CD14-positive monocyte (primary cell): ENCODE measurements at regions of chr19 and their contacts with region 1.

Region 1: GRCh38 chr19:51259348-51260245 is 8.7 kb downstream of the SIGLECL1 start:
- DNase-seq: peak; percentile 41 to 60 (median 52)
- H3K4me3 ChIP-seq: no peak overlapping the region
- H3K4me3 Mint-ChIP-seq: no peak overlapping the region
- H3K27ac ChIP-seq: no peak overlapping the region
- H3K27ac Mint-ChIP-seq: no peak overlapping the region
- H3K4me1 ChIP-seq: peaks cover 12 to 17% of the 10 kb centered on the region in 2 donors
- H3K4me1 Mint-ChIP-seq: peaks cover 19% of the 10 kb centered on the region
- H3K27me3 ChIP-seq: no peaks in the 10 kb centered on the region
- H3K27me3 Mint-ChIP-seq: peaks cover 0 to 2% (median 1%) of the 10 kb centered on the region in 3 donors
- CTCF ChIP-seq: peak; percentile 89

Region 2: GRCh38 chr19:51158474-51159129 is 101.0 kb before region 1 on chr19:
- intact Hi-C with region 1: loop called (anchors 2 kb)
- DNase-seq: peak; percentile 68 to 73 (median 70)
- H3K4me3 ChIP-seq: no peak overlapping the region
- H3K4me3 Mint-ChIP-seq: no peak overlapping the region
- H3K27ac ChIP-seq: peak overlapping the region in 1 of 2 donors; percentile 24
- H3K27ac Mint-ChIP-seq: peak overlapping the region; percentile 23 to 93 (median 87)
- H3K4me1 ChIP-seq: peaks cover 8 to 13% of the 10 kb centered on the region in 2 donors
- H3K4me1 Mint-ChIP-seq: peaks cover 12% of the 10 kb centered on the region
- H3K27me3 ChIP-seq: no peaks in the 10 kb centered on the region
- H3K27me3 Mint-ChIP-seq: peaks cover 0 to 5% (median 3%) of the 10 kb centered on the region in 3 donors
- CTCF ChIP-seq: peak; percentile 99

Region 3: GRCh38 chr19:51179256-51179655 is 80.3 kb before region 1 on chr19:
- intact Hi-C with region 1: no loop called
- DNase-seq: no peak
- H3K4me3 ChIP-seq: no peak overlapping the region
- H3K4me3 Mint-ChIP-seq: no peak overlapping the region
- H3K27ac ChIP-seq: no peak overlapping the region
- H3K27ac Mint-ChIP-seq: no peak overlapping the region
- H3K4me1 ChIP-seq: peaks cover 22 to 24% of the 10 kb centered on the region in 2 donors
- H3K4me1 Mint-ChIP-seq: peaks cover 22% of the 10 kb centered on the region
- H3K27me3 ChIP-seq: peaks cover 0 to 7% of the 10 kb centered on the region in 2 donors
- H3K27me3 Mint-ChIP-seq: peaks cover 8 to 14% (median 11%) of the 10 kb centered on the region in 3 donors
- CTCF ChIP-seq: no peak

Region 4: GRCh38 chr19:51203916-51204315 is 55.7 kb before region 1 on chr19:
- intact Hi-C with region 1: loop called in 1 of 2 experiments (anchors 10 kb)
- DNase-seq: peak in 2 of 3 donors; percentile 34 to 50
- H3K4me3 ChIP-seq: peak overlapping the region in 1 of 3 experiments; percentile 48
- H3K4me3 Mint-ChIP-seq: peak overlapping the region; percentile 28 to 69
- H3K27ac ChIP-seq: peak overlapping the region in 1 of 2 donors; percentile 48
- H3K27ac Mint-ChIP-seq: peak overlapping the region in 6 of 7 donors; percentile 6 to 91 (median 76)
- H3K4me1 ChIP-seq: peaks cover 25 to 52% of the 10 kb centered on the region in 2 donors
- H3K4me1 Mint-ChIP-seq: peaks cover 61% of the 10 kb centered on the region
- H3K27me3 ChIP-seq: no peaks in the 10 kb centered on the region
- H3K27me3 Mint-ChIP-seq: peaks cover 4 to 8% (median 5%) of the 10 kb centered on the region in 3 donors
- CTCF ChIP-seq: no peak